T-cell (primary cell): ENCODE measurements at regions of chr7 and their contacts with region 1.

Region 1: GRCh38 chr7:26365077-26365900 is 73.6 kb downstream of the SNX10 start:
- DNase-seq: peak in 34 of 35 experiments; percentile 11 to 83 (median 45)
- ATAC-seq: peak; percentile 69 to 81 (median 74)
- H3K4me3 ChIP-seq: no peak overlapping the region
- H3K4me3 Mint-ChIP-seq: no peak overlapping the region
- H3K27ac ChIP-seq: no peak overlapping the region
- H3K27ac Mint-ChIP-seq: peak overlapping the region in 1 of 2 donors; percentile 7
- H3K4me1 ChIP-seq: peaks cover 0 to 8% of the 10 kb centered on the region in 2 experiments
- H3K4me1 Mint-ChIP-seq: peaks cover 6 to 11% (median 10%) of the 10 kb centered on the region in 3 donors
- H3K27me3 ChIP-seq: no peaks in the 10 kb centered on the region
- H3K27me3 Mint-ChIP-seq: peaks cover 0 to 3% of the 10 kb centered on the region in 2 donors

Region 2: GRCh38 chr7:26078437-26079336 is 286.6 kb before region 1 on chr7:
- CTCF ChIA-PET with region 1: interaction called, 15 to 22 read pairs
- POLR2A ChIA-PET with region 1: no interaction called
- DNase-seq: peak; percentile 69 to 89 (median 82)
- ATAC-seq: peak; percentile 99 to 100 (median 100)
- H3K4me3 ChIP-seq: no peak overlapping the region
- H3K4me3 Mint-ChIP-seq: peak overlapping the region; percentile 9 to 38 (median 31)
- H3K27ac ChIP-seq: no peak overlapping the region
- H3K27ac Mint-ChIP-seq: no peak overlapping the region
- H3K4me1 ChIP-seq: peaks cover 0 to 5% of the 10 kb centered on the region in 2 experiments
- H3K4me1 Mint-ChIP-seq: peaks cover 7 to 11% (median 9%) of the 10 kb centered on the region in 3 donors
- H3K27me3 ChIP-seq: peaks cover 0 to 25% of the 10 kb centered on the region in 2 experiments
- H3K27me3 Mint-ChIP-seq: peaks cover 18 to 31% of the 10 kb centered on the region in 2 donors

Region 3: GRCh38 chr7:26293569-26294308 is 71.5 kb before region 1 on chr7:
- CTCF ChIA-PET with region 1: interaction called in 1 of 2 experiments, 13 read pairs
- POLR2A ChIA-PET with region 1: no interaction called
- DNase-seq: peak in 34 of 35 experiments; percentile 6 to 84 (median 51)
- ATAC-seq: peak; percentile 58 to 78 (median 63)
- H3K4me3 ChIP-seq: peak overlapping the region in 1 of 2 donors; percentile 17
- H3K4me3 Mint-ChIP-seq: peak overlapping the region; percentile 64 to 93 (median 90)
- H3K27ac ChIP-seq: peak overlapping the region; percentile 67
- H3K27ac Mint-ChIP-seq: peak overlapping the region; percentile 79 to 87
- H3K4me1 ChIP-seq: peaks cover 6 to 33% of the 10 kb centered on the region in 2 experiments
- H3K4me1 Mint-ChIP-seq: peaks cover 32 to 40% (median 37%) of the 10 kb centered on the region in 3 donors
- H3K27me3 ChIP-seq: no peaks in the 10 kb centered on the region
- H3K27me3 Mint-ChIP-seq: no peaks in the 10 kb centered on the region

Region 4: GRCh38 chr7:26627891-26628341 is 262.6 kb after region 1 on chr7:
- CTCF ChIA-PET with region 1: no interaction called
- POLR2A ChIA-PET with region 1: no interaction called
- DNase-seq: no peak
- ATAC-seq: no peak
- H3K4me3 ChIP-seq: no peak overlapping the region
- H3K4me3 Mint-ChIP-seq: no peak overlapping the region
- H3K27ac ChIP-seq: no peak overlapping the region
- H3K27ac Mint-ChIP-seq: no peak overlapping the region
- H3K4me1 ChIP-seq: no peaks in the 10 kb centered on the region
- H3K4me1 Mint-ChIP-seq: no peaks in the 10 kb centered on the region
- H3K27me3 ChIP-seq: peaks cover 0 to 11% of the 10 kb centered on the region in 2 experiments
- H3K27me3 Mint-ChIP-seq: peaks cover 8 to 10% of the 10 kb centered on the region in 2 donors

Region 5: DNA sequence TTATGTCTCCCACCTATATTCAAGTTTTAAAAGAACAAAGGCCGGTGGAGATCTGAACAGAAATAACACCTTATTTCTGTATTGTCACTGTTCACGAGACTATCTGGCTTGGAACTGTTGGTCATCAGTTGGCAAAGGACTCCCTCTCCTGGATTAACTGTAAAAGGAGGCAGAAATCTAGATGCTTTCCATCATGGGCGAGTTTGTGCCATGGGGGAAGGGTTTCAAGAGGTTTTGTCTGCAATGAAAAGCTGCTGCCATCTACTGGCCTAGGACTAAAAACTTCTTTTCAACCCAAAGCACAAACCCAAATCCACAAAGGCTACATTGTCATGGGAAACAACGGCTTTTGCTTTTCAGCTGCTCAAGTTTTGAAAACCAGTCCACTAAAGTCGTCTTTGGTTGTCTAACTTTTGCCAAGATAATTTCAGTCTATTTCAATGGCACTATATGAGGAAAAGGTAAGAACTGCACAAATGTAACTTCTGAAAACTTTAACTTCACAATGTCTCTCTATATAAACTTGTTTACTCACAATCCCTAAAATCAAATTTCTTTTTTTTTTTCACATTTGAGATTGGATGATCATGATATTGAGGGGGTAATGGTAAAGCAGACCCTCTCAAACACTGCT is 302.3 kb after region 1 on chr7:
- CTCF ChIA-PET with region 1: interaction called, 16 to 26 read pairs
- POLR2A ChIA-PET with region 1: no interaction called
- DNase-seq: peak in 33 of 35 experiments; percentile 3 to 79 (median 33)
- ATAC-seq: peak in 3 of 4 experiments; percentile 40 to 59 (median 58)
- H3K4me3 ChIP-seq: no peak overlapping the region
- H3K4me3 Mint-ChIP-seq: no peak overlapping the region
- H3K27ac ChIP-seq: no peak overlapping the region
- H3K27ac Mint-ChIP-seq: no peak overlapping the region
- H3K4me1 ChIP-seq: peaks cover 0 to 3% of the 10 kb centered on the region in 2 experiments
- H3K4me1 Mint-ChIP-seq: peaks cover 17 to 24% (median 20%) of the 10 kb centered on the region in 3 donors
- H3K27me3 ChIP-seq: no peaks in the 10 kb centered on the region
- H3K27me3 Mint-ChIP-seq: peaks cover 12 to 15% of the 10 kb centered on the region in 2 donors

Region 6: DNA sequence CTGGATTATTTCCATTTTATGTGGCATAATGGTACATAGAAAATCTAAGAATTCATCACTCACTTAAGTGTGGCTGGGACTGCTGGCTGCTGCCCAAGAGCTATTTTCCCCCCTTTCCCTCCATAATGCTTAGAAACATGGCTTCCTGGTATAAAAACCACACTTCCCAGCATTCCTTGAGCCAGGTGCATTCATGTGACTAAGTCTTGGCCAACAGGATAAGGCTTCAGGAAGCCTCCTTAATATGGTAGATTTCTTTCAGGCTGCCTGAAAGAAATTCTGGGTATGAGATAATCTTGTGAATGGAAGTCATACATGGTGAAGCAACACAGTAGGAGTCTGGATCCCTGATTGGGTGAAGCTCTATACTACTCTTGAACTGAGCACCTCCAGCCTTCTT is 1637.3 kb after region 1 on chr7:
- CTCF ChIA-PET with region 1: no interaction called
- POLR2A ChIA-PET with region 1: no interaction called
- DNase-seq: no peak
- ATAC-seq: no peak
- H3K4me3 ChIP-seq: no peak overlapping the region
- H3K4me3 Mint-ChIP-seq: no peak overlapping the region
- H3K27ac ChIP-seq: no peak overlapping the region
- H3K27ac Mint-ChIP-seq: no peak overlapping the region
- H3K4me1 ChIP-seq: no peaks in the 10 kb centered on the region
- H3K4me1 Mint-ChIP-seq: peaks cover 9 to 38% (median 12%) of the 10 kb centered on the region in 3 donors
- H3K27me3 ChIP-seq: no peaks in the 10 kb centered on the region
- H3K27me3 Mint-ChIP-seq: no peaks in the 10 kb centered on the region